PC-9 (cell line): ENCODE measurements at regions of chr6 and their contacts with region 1.

Region 1: DNA sequence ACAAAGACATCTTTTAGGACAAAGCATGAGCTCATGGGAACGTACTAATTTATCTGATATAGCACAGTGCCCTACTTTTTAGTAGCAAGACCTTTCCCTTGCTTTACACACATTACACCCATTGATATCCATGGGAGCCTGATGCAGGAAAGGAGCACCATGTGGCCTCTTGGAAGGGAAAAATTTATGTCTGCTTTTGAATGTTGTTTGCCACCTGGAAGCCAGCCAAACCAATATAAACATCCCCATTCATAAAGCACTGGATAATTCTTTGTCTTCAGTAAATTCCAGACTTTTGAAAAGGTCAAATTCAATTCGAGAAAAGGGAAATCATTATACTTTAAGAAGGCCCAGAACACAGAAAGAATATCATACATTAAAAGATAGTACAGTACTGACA is 152.3 kb upstream of the BEND6 start:
- DNase-seq: peak; percentile 16 to 42
- H3K4me3 ChIP-seq: no peak overlapping the region
- H3K27ac ChIP-seq: no peak overlapping the region
- H3K4me1 ChIP-seq: peaks cover 25% of the 10 kb centered on the region
- H3K27me3 ChIP-seq: no peaks in the 10 kb centered on the region
- CTCF ChIP-seq: no peak

Region 2: DNA sequence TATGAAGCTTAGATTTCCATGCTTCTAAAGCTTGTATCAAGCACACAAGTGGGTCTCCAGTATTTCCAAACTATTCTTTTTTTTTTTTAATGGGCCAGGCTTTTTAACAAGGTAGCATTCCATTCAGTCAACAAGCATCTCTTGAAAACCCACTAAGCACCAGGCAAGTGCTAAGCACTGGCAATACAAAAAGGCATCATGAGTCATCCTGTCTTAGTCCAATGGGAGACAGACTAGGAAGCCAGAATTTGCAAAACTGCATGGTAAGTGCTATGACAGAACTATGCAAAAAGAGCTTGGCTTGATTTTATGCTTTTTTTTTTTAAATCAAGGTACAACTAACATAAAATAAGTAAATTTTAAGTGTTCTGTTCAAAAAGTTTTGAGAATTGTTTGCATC is 50.6 kb before region 1 on chr6:
- CTCF ChIA-PET with region 1: no interaction called
- POLR2A ChIA-PET with region 1: interaction called, 10 read pairs
- intact Hi-C with region 1: no loop called
- DNase-seq: no peak
- H3K4me3 ChIP-seq: no peak overlapping the region
- H3K27ac ChIP-seq: no peak overlapping the region
- H3K4me1 ChIP-seq: peaks cover 37% of the 10 kb centered on the region
- H3K27me3 ChIP-seq: no peaks in the 10 kb centered on the region
- CTCF ChIP-seq: no peak

Region 3: DNA sequence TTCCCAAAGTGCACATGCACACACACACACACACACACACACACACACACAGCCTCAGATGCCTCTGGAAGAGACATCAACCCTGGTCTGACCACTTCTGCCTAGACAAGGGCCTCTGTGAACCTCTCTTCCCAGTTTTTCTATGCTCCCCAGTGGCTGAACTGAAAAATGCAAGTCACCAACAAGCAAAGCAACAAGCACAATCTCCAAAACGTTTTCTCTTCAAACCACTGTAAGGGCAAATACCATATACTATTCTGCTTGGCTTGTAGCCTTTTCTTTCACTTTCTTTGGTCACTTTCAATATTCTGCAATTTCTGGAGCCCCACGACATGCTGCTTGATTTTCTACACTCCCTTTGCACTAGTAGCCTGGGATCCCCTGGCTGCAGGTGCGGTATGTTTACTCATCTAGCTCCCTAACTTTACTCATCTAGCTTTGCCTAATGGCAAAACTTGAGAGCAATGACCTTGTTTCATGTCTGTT is 38.5 kb before region 1 on chr6:
- CTCF ChIA-PET with region 1: interaction called, 6 read pairs
- POLR2A ChIA-PET with region 1: interaction called, 18 read pairs
- intact Hi-C with region 1: no loop called
- DNase-seq: peak; percentile 12 to 38
- H3K4me3 ChIP-seq: no peak overlapping the region
- H3K27ac ChIP-seq: peak overlapping the region; percentile 46; the same call in 1 of the 2 replicates
- H3K4me1 ChIP-seq: peaks cover 21% of the 10 kb centered on the region
- H3K27me3 ChIP-seq: no peaks in the 10 kb centered on the region
- CTCF ChIP-seq: peak; percentile 43; the same call in 1 of the 2 replicates